ENCODE measurements at regions of chr3 and their contacts with region 1.

Region 1: DNA sequence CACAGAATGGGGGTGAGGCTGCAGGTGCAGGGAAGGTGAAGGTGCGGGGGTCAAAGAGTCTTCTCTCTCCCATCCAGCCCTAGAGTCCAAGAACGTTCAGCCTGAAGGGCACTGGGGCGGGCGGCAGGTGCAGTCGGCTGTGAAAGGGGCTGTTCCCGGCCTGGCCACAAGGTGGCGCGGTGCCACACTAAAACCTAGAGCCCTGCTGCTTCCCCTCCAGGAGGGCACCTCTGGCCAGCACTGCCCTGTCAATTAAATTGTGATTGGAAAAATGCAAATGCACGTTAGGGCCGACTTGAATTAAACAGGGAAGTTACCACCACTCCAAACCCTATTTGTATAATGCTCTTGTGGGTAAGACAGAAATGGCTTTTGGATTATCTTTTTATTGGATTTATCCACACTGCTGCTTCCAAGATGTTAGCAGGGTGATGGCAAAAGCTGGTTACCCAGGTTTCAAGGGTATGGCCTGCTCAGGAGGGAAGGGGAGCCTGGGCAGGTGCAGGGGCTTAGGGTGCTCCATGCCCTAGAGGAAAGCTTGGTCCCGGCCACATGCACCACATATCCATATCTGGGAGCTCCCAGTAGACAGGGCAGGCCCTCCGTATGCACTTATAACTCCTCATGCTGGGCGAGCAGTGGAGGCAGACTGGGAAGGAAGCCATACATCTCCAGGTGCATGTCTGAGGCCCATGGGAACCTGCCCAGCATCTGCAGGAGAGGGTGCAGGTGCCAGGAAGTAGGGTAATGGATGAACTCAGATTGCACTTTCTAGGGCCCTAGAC is 119.8 kb downstream of the ADCY5 start:
- DNase-seq: peak; percentile 85 to 90
- H3K4me3 ChIP-seq: no peak overlapping the region
- H3K27ac ChIP-seq: peak overlapping the region in 2 of 5 donors; percentile 71
- H3K4me1 ChIP-seq: peaks cover 0 to 51% (median 24%) of the 10 kb centered on the region in 4 donors
- H3K27me3 ChIP-seq: peaks cover 0 to 10% (median 0%) of the 10 kb centered on the region in 3 donors
- CTCF ChIP-seq: peak in 5 of 7 experiments; percentile 62 to 95 (median 93)
- EP300 ChIP-seq: no peak
- POLR2A ChIP-seq: no peak

Region 2: DNA sequence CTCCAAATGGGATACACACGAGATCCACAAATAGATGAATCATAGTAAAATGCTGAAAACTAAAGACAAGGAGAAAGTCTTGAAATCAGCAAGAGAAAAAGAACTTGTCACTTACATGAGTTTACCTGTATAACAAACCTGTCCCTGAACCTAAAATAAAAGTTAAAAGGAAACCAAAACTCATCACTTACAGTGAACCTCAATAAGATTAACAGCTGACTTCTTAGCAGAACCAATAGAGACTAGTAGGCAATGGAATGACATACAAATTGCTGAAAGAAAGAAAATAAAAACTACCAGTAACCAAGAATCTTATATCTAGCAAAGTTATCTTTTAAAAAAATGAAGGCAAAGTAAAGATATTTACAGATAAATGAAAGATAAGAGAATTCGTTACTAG is 99.9 kb before region 1 on chr3:
- intact Hi-C with region 1: no loop called
- DNase-seq: no peak
- H3K4me3 ChIP-seq: no peak overlapping the region
- H3K27ac ChIP-seq: no peak overlapping the region
- H3K4me1 ChIP-seq: no peaks in the 10 kb centered on the region
- H3K27me3 ChIP-seq: no peaks in the 10 kb centered on the region
- CTCF ChIP-seq: no peak
- EP300 ChIP-seq: no peak
- POLR2A ChIP-seq: no peak

Region 3: GRCh38 chr3:123489400-123490004 is 160.5 kb after region 1 on chr3:
- intact Hi-C with region 1: loop called (anchors 5 kb)
- DNase-seq: peak; percentile 65 to 89
- H3K4me3 ChIP-seq: no peak overlapping the region
- H3K27ac ChIP-seq: peak overlapping the region in 2 of 5 donors; percentile 15 to 27
- H3K4me1 ChIP-seq: no peaks in the 10 kb centered on the region
- H3K27me3 ChIP-seq: no peaks in the 10 kb centered on the region
- CTCF ChIP-seq: peak in 6 of 7 experiments; percentile 57 to 80 (median 76)
- EP300 ChIP-seq: no peak
- POLR2A ChIP-seq: no peak

Region 4: DNA sequence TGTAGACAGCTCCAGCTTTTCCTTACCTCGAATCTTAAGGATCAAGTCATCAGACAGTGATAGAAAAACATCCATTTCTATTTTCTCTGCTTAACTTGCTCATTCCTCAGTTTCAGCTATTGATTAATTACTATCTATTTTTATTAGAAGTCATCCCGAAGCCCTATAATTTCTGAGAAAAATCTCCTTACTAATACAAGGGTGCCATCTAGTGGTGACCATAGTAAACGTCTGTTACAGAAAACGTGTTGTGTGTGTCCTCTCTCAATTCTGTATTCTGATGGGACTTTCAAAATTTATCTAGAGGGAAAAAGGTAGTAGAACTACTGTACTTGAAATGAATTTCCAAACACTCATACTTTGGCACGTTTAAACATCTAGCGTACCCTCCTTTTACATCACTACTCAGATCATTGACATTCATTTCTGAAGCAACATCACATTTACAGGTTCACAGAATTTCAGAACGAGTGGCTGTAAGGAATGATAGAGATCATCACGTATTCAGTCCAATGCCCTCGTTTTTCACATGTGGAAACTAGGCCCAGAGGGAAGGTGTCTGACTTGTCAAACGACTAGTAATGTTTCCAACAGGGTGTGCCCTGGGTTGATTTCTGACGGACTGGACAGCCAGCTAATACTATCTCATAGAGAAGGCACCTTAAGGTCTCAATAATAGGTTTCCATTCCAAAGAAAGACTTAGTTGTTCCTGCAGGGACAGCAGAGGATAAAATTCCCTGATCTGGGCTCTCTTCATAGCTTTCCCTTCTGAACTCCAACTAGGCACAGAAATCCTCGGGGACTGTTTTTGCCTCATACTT is 230.2 kb after region 1 on chr3:
- intact Hi-C with region 1: loop called (anchors 5 kb)
- DNase-seq: peak in 1 of 2 donors; percentile 79
- H3K4me3 ChIP-seq: no peak overlapping the region
- H3K27ac ChIP-seq: no peak overlapping the region
- H3K4me1 ChIP-seq: peaks cover 0 to 6% (median 0%) of the 10 kb centered on the region in 4 donors
- H3K27me3 ChIP-seq: no peaks in the 10 kb centered on the region
- CTCF ChIP-seq: peak in 5 of 7 experiments; percentile 27 to 77 (median 65)
- EP300 ChIP-seq: no peak
- POLR2A ChIP-seq: no peak

Region 5: DNA sequence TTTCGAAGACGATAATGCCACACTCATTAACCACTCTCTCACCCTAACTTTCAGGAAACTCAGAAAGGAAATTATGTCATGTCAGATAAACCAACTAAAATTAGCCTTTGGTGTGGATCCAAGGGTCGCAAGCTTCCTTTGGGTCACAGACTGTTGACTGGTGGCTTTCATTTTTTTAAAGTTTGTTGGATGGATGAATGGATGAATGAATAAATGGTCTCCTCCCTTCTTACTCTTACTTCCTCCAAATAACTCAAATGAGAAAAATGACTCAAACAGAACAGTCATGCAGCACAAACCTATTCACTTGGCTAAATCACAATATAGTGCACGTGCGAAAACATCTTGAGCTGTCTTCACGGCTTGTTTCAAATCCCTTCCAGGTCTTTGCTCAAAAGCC is 338.7 kb after region 1 on chr3:
- intact Hi-C with region 1: no loop called
- DNase-seq: no peak
- H3K4me3 ChIP-seq: no peak overlapping the region
- H3K27ac ChIP-seq: peak overlapping the region in 3 of 5 donors; percentile 27 to 91 (median 64)
- H3K4me1 ChIP-seq: peaks cover 0 to 51% (median 25%) of the 10 kb centered on the region in 4 donors
- H3K27me3 ChIP-seq: no peaks in the 10 kb centered on the region
- CTCF ChIP-seq: no peak
- EP300 ChIP-seq: no peak
- POLR2A ChIP-seq: no peak

Measured in stomach (tissue), 19 donors.